Astrocyte of the cerebellum (primary cell): ENCODE measurements at regions of chr6 and their contacts with region 1.

Region 1: GRCh38 chr6:2848851-2849250 is 7.2 kb upstream of the SERPINB1 start:
- DNase-seq: no peak
- H3K4me3 ChIP-seq: no peak overlapping the region
- CTCF ChIP-seq: no peak

Region 2: GRCh38 chr6:2900821-2901644 is 52.2 kb after region 1 on chr6:
- in situ Hi-C with region 1: no loop called
- DNase-seq: no peak
- H3K4me3 ChIP-seq: no peak overlapping the region
- CTCF ChIP-seq: no peak

Region 3: DNA sequence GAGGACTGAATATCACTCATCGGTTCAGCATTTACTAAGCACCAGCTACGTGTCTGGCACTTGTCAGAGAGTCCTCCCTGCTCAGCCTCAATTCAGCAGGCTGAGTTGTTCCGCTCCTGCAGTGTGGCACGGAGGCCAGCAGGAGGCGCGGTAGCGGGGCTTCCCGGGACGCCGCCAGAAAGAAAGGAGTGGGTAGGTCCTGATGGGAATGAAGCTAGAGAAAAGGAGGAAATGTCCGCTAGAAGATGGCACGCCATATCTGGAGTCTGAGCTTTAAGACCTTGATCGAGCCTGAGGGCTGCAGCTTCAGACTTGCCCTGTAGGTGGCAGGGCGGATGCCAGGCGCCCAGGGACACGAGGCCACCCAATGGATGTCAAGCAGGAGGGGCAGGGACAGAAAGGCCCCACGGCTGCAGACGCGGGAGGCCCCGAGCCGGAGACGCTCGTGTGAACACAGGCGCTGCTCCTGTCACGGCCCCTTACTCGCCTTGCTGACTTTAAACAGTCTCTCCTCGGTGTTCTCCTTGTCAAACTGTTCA is 103.8 kb after region 1 on chr6:
- in situ Hi-C with region 1: loop called (anchors 5 kb)
- DNase-seq: peak; percentile 68
- H3K4me3 ChIP-seq: no peak overlapping the region
- CTCF ChIP-seq: peak; percentile 100